ENCODE measurements at regions of chr14 and their contacts with region 1.

Region 1: GRCh38 chr14:25006961-25007795 is 42.8 kb downstream of the STXBP6 start:
- DNase-seq: no peak
- ATAC-seq: peak; percentile 47 to 92 (median 83)
- H3K4me3 ChIP-seq: no peak overlapping the region
- H3K27ac ChIP-seq: peak overlapping the region in 5 of 12 donors; percentile 5 to 54 (median 14)
- H3K4me1 ChIP-seq: peaks cover 14 to 76% (median 35%) of the 10 kb centered on the region in 12 donors
- H3K27me3 ChIP-seq: no peaks in the 10 kb centered on the region
- CTCF ChIP-seq: no peak
- POLR2A ChIP-seq: no peak

Region 2: GRCh38 chr14:24879661-24880386 is 127.4 kb before region 1 on chr14:
- intact Hi-C with region 1: loop called in 1 of 10 experiments (anchors 5 kb)
- DNase-seq: peak in 1 of 5 donors; percentile 35
- ATAC-seq: peak; percentile 29 to 63 (median 56)
- H3K4me3 ChIP-seq: no peak overlapping the region
- H3K27ac ChIP-seq: peak overlapping the region; percentile 33 to 81 (median 71)
- H3K4me1 ChIP-seq: peaks cover 9 to 78% (median 44%) of the 10 kb centered on the region in 12 donors
- H3K27me3 ChIP-seq: no peaks in the 10 kb centered on the region
- CTCF ChIP-seq: no peak
- POLR2A ChIP-seq: no peak

Region 3: GRCh38 chr14:24959791-24960331 is 47.3 kb before region 1 on chr14:
- intact Hi-C with region 1: loop called in 1 of 10 experiments (anchors 5 kb)
- DNase-seq: no peak
- ATAC-seq: peak; percentile 66 to 72 (median 66)
- H3K4me3 ChIP-seq: no peak overlapping the region
- H3K27ac ChIP-seq: peak overlapping the region in 11 of 12 donors; percentile 1 to 70 (median 51)
- H3K4me1 ChIP-seq: peaks cover 5 to 69% (median 35%) of the 10 kb centered on the region in 12 donors
- H3K27me3 ChIP-seq: no peaks in the 10 kb centered on the region
- CTCF ChIP-seq: no peak
- POLR2A ChIP-seq: no peak